ENCODE measurements at regions of chr2 and their contacts with region 1.

Region 1: DNA sequence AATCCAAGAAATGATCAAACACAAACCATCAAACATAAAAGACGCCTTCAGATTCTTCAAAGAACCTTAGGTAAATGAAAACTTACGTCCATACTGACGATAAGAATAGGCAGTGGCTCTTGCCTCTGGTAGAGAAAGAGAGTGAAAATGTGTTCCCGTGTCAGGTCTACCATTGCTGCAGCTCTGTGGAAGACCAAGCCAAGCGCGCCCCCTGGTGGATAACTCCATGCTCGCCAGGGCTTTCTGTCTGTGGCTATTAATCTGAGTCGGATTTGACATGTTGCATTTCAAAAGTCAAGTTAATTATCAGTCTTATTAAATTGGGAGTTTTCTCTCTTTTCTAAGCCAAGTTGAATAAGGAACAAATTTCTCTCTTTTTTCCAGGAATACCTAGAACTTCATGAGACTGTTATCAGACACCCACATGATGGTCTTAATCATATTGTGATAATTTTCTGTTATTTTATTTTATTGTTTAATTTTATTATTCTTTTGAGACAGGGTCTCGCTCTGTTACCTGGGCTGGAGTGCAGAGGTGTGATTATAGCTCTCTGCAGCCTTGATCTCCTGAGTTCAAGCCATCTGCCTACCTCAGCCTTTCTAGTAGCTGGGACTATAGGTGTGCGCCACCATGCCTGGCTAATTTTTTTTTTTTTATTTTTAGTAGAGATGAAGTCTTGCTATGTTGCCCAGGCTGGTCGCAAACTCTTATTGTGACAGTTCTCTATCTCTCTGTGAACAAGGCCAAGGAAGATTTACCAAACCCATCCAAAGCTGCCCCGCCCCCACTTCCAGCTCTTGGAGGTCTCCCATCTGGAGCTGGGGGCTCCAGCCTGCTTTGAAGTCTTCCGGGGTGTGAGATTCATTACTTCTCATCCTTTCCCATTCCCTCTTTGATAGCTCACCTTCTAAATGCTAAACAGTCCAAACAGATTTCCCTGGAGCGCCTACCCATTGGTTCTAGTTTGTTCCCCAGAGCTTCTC is 15.8 kb upstream of the ZAP70 start:
- DNase-seq: peak; percentile 89 to 94
- ATAC-seq: peak; percentile 89 to 93 (median 91)
- H3K4me3 ChIP-seq: no peak overlapping the region
- H3K4me3 Mint-ChIP-seq: no peak overlapping the region
- H3K27ac ChIP-seq: no peak overlapping the region
- H3K27ac Mint-ChIP-seq: no peak overlapping the region
- H3K4me1 ChIP-seq: no peaks in the 10 kb centered on the region
- H3K4me1 Mint-ChIP-seq: peaks cover 4 to 5% of the 10 kb centered on the region in 2 donors
- H3K27me3 ChIP-seq: no peaks in the 10 kb centered on the region
- H3K27me3 Mint-ChIP-seq: peaks cover 4 to 10% of the 10 kb centered on the region in 2 donors
- CTCF ChIP-seq: peak; percentile 90

Region 2: DNA sequence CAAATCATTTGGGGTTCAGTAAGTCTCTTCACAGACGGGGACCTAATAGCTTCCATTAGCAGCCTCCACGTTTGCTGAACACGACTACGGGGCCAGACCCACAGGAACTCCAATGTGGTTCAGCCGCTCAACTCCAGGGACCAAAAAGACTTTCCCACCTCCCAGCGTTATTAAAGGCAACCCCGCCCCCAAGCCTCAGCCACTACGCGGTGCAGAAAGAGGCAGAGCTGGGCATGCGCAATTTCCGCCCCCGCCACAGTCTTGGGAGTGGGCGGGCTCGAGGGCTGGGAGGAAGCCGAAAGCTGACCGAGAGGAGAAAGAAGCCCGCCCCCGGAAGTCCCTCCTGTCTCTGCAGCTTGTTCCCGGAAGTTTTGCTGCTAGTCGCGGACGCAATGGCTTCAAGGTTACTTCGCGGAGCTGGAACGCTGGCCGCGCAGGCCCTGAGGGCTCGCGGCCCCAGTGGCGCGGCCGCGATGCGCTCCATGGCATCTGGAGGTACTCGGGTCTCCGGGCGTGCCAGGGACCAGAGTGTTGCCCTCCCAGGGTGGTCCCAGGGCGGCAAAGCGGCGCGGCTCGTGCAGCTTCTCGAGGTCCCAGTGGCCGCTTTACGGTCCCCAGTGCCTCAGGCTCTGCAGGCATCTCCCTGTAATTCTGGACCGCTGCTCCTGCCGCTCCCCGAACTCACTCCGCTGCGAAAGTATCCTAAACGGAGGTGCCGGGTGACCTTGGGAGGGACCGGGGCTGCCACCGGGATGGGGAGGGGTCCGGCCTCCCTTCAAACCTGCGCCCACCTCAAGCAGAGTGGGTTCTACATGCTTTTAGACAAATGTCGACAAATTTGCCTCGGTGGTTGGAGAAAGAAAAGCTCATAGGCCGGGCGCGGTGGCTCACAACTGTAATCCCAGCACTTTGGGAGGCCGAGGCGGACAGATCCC is 51.6 kb before region 1 on chr2 and contains the start of gene COX5B:
- intact Hi-C with region 1: loop called (anchors 1 kb)
- DNase-seq: peak; percentile 95 to 99
- ATAC-seq: peak; percentile 96 to 99 (median 98)
- H3K4me3 ChIP-seq: peak within 1 kb of the TSS; percentile 68
- H3K4me3 Mint-ChIP-seq: peak within 1 kb of the TSS; percentile 96
- H3K27ac ChIP-seq: peak within 1 kb of the TSS; percentile 77
- H3K27ac Mint-ChIP-seq: peak within 1 kb of the TSS; percentile 96 to 99
- H3K4me1 ChIP-seq: peaks cover 22% of the 10 kb centered on the region
- H3K4me1 Mint-ChIP-seq: peaks cover 23 to 27% of the 10 kb centered on the region in 2 donors
- H3K27me3 ChIP-seq: no peaks in the 10 kb centered on the region
- H3K27me3 Mint-ChIP-seq: no peaks in the 10 kb centered on the region
- CTCF ChIP-seq: no peak
- total RNA-seq, gene COX5B: 101 to 126 (median 122) TPM

Region 3: DNA sequence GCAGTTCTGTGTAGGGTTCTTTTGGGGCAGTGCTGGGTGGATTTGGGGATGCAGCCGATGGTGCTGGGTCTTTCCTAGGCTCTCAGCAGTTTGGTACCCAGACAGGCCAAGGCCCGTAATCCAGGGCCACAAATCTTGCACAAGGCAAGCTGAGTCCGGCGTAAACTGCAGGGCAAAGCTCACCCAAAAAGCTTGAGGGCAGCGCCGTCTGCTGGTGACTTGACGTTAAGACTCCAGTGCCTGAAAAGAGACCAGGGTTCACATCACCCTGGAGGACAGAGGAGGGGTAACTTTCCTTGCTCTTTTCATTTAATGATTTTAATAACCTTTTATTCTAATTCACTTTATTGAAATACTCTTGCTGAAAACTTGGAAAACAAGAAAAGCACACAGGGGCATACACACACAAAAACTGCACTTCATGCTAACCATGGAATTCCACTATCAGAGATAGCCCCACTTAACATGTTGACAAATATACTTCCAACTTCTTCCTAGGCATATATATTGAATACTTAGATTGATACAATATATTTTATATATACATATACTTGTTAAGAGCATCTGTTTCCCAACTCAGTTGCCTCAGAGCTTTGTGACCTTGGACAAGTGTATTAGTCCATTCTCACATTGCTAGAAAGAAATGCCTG is 687.6 kb after region 1 on chr2:
- intact Hi-C with region 1: loop called (anchors 2 kb)
- DNase-seq: peak; percentile 62 to 82
- ATAC-seq: peak; percentile 75 to 95 (median 86)
- H3K4me3 ChIP-seq: no peak overlapping the region
- H3K4me3 Mint-ChIP-seq: no peak overlapping the region
- H3K27ac ChIP-seq: no peak overlapping the region
- H3K27ac Mint-ChIP-seq: no peak overlapping the region
- H3K4me1 ChIP-seq: no peaks in the 10 kb centered on the region
- H3K4me1 Mint-ChIP-seq: no peaks in the 10 kb centered on the region
- H3K27me3 ChIP-seq: no peaks in the 10 kb centered on the region
- H3K27me3 Mint-ChIP-seq: peaks cover 15 to 20% of the 10 kb centered on the region in 2 donors
- CTCF ChIP-seq: peak; percentile 83

Measured in natural killer cell (primary cell).